ENCODE measurements at regions of chr20 and their contacts with region 1.

Region 1: DNA sequence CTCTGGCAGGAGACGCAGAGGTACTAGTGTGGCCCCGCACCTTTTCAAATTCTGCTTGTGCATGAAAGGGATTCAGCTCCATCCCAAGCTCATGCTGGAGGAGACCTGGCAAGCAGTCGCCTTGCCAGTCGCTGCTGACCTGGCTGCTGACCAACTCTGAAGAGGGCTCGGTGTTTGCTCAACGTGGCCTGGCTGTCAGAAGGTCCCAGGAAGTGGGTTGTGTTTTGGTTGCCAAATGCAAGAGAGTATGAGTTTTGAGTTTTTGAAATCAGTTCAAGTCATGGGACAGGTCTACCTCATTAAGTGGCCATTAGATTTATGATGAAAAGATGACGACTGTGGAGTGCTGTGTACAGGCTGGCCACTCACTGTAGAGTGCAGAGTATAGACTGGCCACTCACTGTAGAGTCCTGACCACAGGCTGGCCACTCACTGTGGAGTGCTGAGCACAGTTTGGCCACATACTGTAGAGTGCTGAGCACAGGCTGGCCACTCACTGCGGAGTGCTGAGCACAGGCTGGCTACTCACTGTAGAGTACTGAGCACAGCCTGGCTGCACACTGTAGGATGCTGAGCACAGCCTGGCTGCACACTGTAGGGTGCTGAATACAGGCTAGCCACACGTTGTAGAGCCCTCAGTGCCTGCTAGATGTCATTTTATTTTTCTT is 193.9 kb downstream of the ZNF217 start:
- DNase-seq: no peak
- H3K4me3 ChIP-seq: no peak overlapping the region
- H3K27ac ChIP-seq: no peak overlapping the region
- H3K4me1 ChIP-seq: no peaks in the 10 kb centered on the region
- H3K27me3 ChIP-seq: no peaks in the 10 kb centered on the region
- CTCF ChIP-seq: no peak
- POLR2A ChIP-seq: no peak

Region 2: GRCh38 chr20:53379014-53379832 is 20.5 kb before region 1 on chr20:
- intact Hi-C with region 1: no loop called
- DNase-seq: peak in 1 of 2 donors; percentile 20
- H3K4me3 ChIP-seq: no peak overlapping the region
- H3K27ac ChIP-seq: no peak overlapping the region
- H3K4me1 ChIP-seq: no peaks in the 10 kb centered on the region
- H3K27me3 ChIP-seq: no peaks in the 10 kb centered on the region
- CTCF ChIP-seq: no peak
- POLR2A ChIP-seq: no peak

Region 3: DNA sequence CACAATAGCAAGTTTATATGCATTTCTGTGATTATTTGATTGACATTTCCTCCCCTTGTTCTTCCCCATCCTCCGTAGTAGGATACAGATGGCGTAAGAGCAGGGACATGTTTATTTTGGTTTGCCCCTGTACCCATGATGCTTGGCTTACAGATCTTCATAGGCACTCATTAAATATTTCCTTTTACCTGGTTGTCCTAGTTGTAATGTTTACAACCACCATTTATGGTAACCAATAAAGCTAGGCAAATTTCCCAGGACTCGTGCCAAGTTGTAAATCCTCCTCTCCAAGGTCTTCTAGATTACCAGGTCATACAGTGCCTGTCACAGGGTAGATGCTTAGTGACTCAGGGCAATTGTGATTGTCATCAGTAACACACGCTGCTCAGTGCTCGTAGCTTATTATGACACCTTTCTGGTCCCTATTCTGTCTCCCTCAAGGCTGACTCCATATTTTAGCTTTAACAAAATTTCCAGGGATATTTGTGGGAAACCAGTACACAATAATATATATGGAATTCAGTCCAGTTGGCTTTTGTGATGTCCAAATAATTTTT is 749.3 kb after region 1 on chr20:
- intact Hi-C with region 1: loop called (anchors 5 kb)
- DNase-seq: peak in 1 of 2 donors; percentile 40
- H3K4me3 ChIP-seq: no peak overlapping the region
- H3K27ac ChIP-seq: no peak overlapping the region
- H3K4me1 ChIP-seq: no peaks in the 10 kb centered on the region
- H3K27me3 ChIP-seq: no peaks in the 10 kb centered on the region
- CTCF ChIP-seq: no peak
- POLR2A ChIP-seq: no peak